Transverse colon (tissue), 4 donors: ENCODE measurements at regions of chr19 and their contacts with region 1.

Region 1: DNA sequence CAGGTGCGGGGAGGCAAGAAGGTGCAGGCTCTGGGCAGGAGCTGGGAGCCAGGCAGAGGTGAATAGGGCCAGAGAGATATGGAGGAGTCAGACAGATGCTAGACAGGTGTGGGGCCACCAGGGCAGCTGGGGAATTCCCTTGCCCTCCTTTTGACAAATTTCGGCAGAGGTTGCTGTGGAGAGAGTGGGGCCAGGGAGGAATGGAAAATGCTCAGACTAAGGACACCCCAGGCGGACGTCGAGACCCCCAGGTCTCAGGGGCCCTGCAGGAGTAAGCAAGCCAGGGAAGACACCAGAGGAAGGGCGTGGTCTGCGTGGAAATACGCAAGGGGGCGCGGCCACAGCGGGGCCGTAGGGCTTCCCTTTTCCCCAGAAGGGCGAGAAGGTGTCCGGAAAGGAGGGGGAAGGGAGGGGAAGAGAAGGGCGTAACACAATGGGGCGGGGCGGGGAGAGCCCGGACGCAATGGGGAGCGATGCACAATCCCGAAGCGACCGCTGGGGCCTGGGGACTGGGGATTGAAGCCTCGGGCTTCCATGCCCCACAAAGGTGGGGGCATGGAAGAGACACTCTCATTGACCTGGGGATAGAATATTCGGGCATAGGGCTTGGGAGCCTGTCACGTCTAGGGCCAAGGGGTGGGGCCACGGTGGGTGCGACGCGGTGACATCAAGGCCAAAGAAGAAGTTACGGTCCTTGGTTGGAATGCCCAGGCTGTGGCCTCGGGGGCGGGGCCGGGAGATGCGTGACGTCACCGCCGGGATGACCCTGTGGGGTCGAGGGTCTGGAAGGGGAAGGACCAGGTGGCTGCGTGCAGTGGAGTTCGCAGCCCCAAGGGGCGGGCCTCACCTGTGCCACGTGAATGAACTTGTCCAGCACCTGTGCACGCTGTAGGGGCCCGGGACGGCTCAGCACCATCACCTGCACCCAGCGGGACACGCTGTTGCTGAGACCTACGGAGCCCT is 8.2 kb downstream of the RASGRP4 start:
- DNase-seq: peak; percentile 75
- H3K4me3 ChIP-seq: peak overlapping the region in 3 of 4 donors; percentile 10 to 40 (median 20)
- H3K27ac ChIP-seq: no peak overlapping the region
- H3K4me1 ChIP-seq: peaks cover 4 to 10% (median 8%) of the 10 kb centered on the region in 4 donors
- H3K27me3 ChIP-seq: peaks cover 21% of the 10 kb centered on the region
- CTCF ChIP-seq: peak in 1 of 5 experiments; percentile 7
- EP300 ChIP-seq: no peak
- POLR2A ChIP-seq: no peak

Region 2: GRCh38 chr19:38464421-38465082 is 46.7 kb after region 1 on chr19:
- in situ Hi-C with region 1: no loop called
- intact Hi-C with region 1: no loop called
- DNase-seq: no peak
- H3K4me3 ChIP-seq: no peak overlapping the region
- H3K27ac ChIP-seq: no peak overlapping the region
- H3K4me1 ChIP-seq: no peaks in the 10 kb centered on the region
- H3K27me3 ChIP-seq: no peaks in the 10 kb centered on the region
- CTCF ChIP-seq: no peak
- EP300 ChIP-seq: no peak
- POLR2A ChIP-seq: no peak

Region 3: DNA sequence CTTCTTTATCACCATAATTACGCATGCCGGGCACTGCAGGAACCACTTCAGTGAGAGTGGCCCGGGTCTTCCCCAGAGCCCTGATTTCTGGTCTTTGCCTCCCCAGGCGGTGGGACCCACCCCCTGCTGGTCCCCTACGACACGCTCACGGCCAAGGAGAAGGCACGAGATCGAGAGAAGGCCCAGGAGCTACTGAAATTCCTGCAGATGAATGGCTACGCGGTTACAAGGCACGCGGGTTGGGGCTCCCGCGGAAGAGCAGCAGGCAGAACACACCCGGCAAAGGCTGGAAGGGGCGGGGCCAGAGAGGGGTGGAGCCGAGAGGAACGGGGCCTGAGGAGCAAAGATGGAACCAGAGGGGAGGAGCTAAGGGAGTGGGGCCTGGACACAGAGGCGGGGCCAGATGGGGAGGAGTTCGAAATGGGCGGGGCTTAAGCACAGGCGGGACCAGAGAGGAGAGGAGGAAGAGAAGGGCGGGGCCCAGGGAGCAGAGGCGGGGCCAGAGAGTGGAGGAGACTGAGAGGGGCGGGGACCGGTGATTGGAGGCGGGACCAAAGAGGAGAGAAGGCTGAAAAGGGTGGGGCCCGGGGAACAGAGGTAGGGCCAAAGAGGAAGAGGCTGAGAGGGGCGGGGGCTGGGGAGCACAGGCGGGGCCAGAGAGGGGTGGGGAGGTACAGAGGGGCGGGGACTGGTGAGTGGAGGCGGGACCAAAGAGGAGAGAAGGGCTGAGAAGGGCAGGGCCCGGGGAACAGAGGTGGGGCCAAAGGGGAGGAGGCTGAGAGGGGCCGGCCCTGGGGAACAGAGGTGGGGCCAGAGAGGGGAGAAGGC is 89.1 kb after region 1 on chr19:
- in situ Hi-C with region 1: no loop called
- intact Hi-C with region 1: no loop called
- DNase-seq: peak; percentile 88
- H3K4me3 ChIP-seq: no peak overlapping the region
- H3K27ac ChIP-seq: no peak overlapping the region
- H3K4me1 ChIP-seq: no peaks in the 10 kb centered on the region
- H3K27me3 ChIP-seq: no peaks in the 10 kb centered on the region
- CTCF ChIP-seq: no peak
- EP300 ChIP-seq: no peak
- POLR2A ChIP-seq: no peak

Region 4: DNA sequence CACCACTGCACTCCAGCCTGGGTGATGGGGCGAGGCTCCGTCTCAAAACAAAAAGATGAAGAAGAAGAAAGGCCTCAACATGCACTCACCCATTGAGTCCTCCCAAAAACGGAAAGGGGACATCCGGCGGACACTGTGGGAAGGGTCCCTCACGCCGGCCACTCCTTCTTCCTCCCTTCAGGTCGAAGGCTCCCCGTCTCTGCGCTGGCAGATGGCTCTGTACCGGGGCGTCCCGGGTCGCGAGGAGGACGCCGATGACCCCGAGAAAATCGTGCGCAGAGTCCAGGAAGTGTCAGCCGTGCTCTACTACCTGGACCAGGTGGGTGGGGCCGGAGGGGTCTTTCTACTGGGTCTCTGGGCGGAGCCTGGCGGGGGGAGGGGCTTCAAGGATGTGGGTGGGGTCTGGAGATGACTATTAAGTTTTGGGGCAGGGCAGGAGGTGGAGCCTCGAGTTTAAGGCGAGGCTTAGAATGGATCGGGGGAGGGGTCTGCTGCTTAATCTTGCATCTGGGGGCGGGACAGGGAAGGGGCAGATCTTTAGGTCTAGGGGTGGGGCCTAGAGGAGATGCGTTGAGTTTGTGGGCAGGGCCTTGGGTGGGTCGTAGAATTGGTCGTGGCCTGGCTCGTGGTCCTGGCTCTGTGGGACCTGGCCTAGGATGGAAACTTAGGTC is 109.8 kb after region 1 on chr19:
- in situ Hi-C with region 1: loop called in 1 of 4 experiments (anchors 10 kb)
- intact Hi-C with region 1: no loop called
- DNase-seq: no peak
- H3K4me3 ChIP-seq: no peak overlapping the region
- H3K27ac ChIP-seq: no peak overlapping the region
- H3K4me1 ChIP-seq: no peaks in the 10 kb centered on the region
- H3K27me3 ChIP-seq: no peaks in the 10 kb centered on the region
- CTCF ChIP-seq: no peak
- EP300 ChIP-seq: no peak
- POLR2A ChIP-seq: no peak